ENCODE measurements at regions of chr4 and their contacts with region 1.

Region 1: GRCh38 chr4:145061318-145061920 is 36.6 kb downstream of the ANAPC10 start:
- DNase-seq: no peak
- ATAC-seq: no peak
- H3K4me3 Mint-ChIP-seq: no peak overlapping the region
- H3K27ac Mint-ChIP-seq: no peak overlapping the region
- H3K4me1 Mint-ChIP-seq: no peaks in the 10 kb centered on the region
- H3K27me3 Mint-ChIP-seq: no peaks in the 10 kb centered on the region
- CTCF ChIP-seq: no peak

Region 2: GRCh38 chr4:144611846-144612245 is 449.6 kb before region 1 on chr4:
- CTCF ChIA-PET with region 1: interaction called, 3 read pairs
- POLR2A ChIA-PET with region 1: no interaction called
- intact Hi-C with region 1: loop called (anchors 2 kb)
- DNase-seq: no peak
- ATAC-seq: no peak
- H3K4me3 Mint-ChIP-seq: no peak overlapping the region
- H3K27ac Mint-ChIP-seq: no peak overlapping the region
- H3K4me1 Mint-ChIP-seq: no peaks in the 10 kb centered on the region
- H3K27me3 Mint-ChIP-seq: peaks cover 4% of the 10 kb centered on the region
- CTCF ChIP-seq: no peak

Region 3: DNA sequence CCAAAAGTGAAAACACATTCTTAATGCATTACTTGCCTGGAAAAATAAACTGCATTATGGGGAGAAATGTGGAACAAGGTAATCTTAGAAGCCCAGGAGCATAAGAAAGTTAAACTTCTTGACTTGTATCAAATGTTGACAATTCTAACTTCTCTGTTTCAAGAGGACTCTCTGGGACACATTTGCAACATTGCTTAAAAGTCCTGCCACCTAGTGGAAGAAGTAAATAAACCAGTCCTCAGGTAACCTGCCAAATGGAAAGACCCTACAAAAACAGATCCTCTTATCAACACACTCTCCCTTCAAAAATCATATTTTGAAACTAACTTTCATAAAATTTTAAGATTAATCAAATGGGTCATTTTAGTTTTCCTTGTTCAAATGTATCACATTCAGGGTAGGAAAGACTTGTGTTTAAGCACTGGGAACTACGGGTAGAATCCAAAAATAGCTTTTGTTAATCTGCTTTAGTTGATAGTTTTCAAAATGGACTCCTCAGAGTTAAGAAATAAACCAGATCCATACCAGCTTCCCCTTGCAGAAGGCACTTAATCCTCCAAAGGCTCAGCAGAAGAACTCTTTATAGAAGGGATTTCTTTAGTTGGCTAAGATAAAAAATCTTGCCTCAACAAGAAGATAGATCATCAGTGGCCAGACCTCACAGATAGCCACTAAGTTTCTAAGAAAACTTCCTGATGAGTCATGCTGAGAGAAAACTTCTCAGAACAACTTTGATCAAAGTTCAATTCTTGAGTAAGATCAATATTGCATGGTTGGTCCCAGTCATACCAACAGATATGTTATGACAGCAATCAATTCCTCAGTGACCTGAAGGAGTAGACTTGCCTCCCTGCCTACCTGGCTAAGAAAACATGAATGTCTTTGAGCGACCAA is 273.8 kb before region 1 on chr4:
- CTCF ChIA-PET with region 1: no interaction called
- POLR2A ChIA-PET with region 1: no interaction called
- intact Hi-C with region 1: loop called (anchors 1 kb)
- DNase-seq: no peak
- ATAC-seq: no peak
- H3K4me3 Mint-ChIP-seq: no peak overlapping the region
- H3K27ac Mint-ChIP-seq: no peak overlapping the region
- H3K4me1 Mint-ChIP-seq: no peaks in the 10 kb centered on the region
- H3K27me3 Mint-ChIP-seq: no peaks in the 10 kb centered on the region
- CTCF ChIP-seq: no peak

Region 4: GRCh38 chr4:144873226-144873990 is 188.0 kb before region 1 on chr4:
- CTCF ChIA-PET with region 1: no interaction called
- POLR2A ChIA-PET with region 1: no interaction called
- intact Hi-C with region 1: no loop called
- DNase-seq: no peak
- ATAC-seq: no peak
- H3K4me3 Mint-ChIP-seq: no peak overlapping the region
- H3K27ac Mint-ChIP-seq: no peak overlapping the region
- H3K4me1 Mint-ChIP-seq: no peaks in the 10 kb centered on the region
- H3K27me3 Mint-ChIP-seq: no peaks in the 10 kb centered on the region
- CTCF ChIP-seq: no peak

Region 5: GRCh38 chr4:145473203-145473602 is 411.8 kb after region 1 on chr4:
- CTCF ChIA-PET with region 1: no interaction called
- POLR2A ChIA-PET with region 1: no interaction called
- intact Hi-C with region 1: no loop called
- DNase-seq: no peak
- ATAC-seq: no peak
- H3K4me3 Mint-ChIP-seq: no peak overlapping the region
- H3K27ac Mint-ChIP-seq: no peak overlapping the region
- H3K4me1 Mint-ChIP-seq: no peaks in the 10 kb centered on the region
- H3K27me3 Mint-ChIP-seq: peaks cover 11% of the 10 kb centered on the region
- CTCF ChIP-seq: no peak